ENCODE measurements at regions of chr1 and their contacts with region 1.

Region 1: DNA sequence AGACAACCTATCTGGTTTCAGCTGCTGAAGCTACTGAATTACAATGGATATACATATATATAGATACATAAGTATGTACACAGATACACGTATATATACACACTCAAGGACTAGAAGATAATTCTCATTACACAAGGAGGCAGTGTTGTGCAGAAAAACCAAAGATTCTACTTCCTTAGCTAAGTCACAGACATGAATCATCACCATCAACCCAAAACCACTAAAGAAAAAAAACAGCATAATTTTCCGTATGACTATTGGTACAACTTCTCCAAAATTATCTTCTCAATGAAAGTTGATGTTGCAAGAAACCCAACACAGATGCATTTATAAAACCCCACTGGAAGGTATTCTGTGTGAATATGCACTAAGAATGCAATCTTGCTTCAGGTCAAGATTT is 36.8 kb upstream of the RPF1 start:
- DNase-seq: no peak
- H3K4me3 Mint-ChIP-seq: no peak overlapping the region
- H3K27ac Mint-ChIP-seq: no peak overlapping the region
- H3K4me1 Mint-ChIP-seq: peaks cover 25% of the 10 kb centered on the region
- H3K27me3 Mint-ChIP-seq: no peaks in the 10 kb centered on the region

Region 2: GRCh38 chr1:84506002-84506728 is 63.9 kb after region 1 on chr1 and contains the starts of genes GNG5 and SPATA1:
- CTCF ChIA-PET with region 1: interaction called, 6 read pairs
- intact Hi-C with region 1: loop called (anchors 1 kb)
- DNase-seq: peak; percentile 97
- H3K4me3 Mint-ChIP-seq: peak within 1 kb of the TSS; percentile 100
- H3K27ac Mint-ChIP-seq: peak within 1 kb of the TSS; percentile 98
- H3K4me1 Mint-ChIP-seq: peaks cover 27% of the 10 kb centered on the region
- H3K27me3 Mint-ChIP-seq: no peaks in the 10 kb centered on the region
- total RNA-seq, gene GNG5: 128 to 132 TPM
- total RNA-seq, gene SPATA1: 1.8 to 2.7 TPM

Region 3: DNA sequence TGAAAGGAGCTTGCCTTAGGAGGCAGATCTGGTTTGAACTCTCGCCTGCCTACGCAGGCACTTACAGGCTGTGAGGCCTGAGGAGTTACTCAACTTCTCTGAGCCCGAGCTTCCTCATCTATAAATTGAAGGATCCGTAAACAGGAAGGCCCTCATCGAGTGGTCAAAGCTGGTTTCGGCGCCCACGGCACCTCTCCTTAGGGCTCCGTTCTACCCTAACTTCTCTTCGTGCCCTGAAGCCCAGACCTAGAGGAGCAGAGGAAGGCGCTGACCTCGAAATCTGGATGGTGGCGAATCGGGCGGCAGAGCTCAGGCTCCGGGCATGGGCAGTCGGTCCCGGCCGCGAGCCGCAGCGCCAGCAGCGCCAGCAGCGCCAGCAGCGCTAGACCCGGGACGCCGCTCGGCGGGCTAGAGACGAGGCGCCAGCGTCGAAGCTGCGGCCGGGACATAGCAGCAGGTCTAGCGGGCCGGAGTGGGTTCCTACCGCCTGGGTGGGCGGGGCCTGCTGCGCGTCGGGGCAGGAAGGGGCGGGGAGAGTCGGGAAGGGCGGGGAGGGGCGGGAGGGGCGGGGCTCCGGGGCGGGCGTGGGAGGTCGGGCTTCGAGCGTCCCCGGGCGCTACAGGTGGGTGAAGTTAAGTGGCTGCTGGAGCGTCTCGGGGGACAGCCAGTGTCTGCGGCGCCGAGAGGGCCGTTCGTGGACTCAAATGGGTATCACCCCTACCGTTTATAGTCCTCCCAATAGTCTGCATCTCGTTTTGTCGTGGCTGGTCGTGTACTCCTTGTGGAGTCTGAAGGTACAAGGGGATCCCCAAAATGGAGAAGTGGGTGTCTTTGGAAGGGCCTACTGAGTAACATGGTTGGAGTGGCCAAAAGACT is 131.9 kb after region 1 on chr1 and contains the start of gene CTBS:
- CTCF ChIA-PET with region 1: interaction called, 9 read pairs
- intact Hi-C with region 1: loop called (anchors 1 kb)
- DNase-seq: peak; percentile 86
- H3K4me3 Mint-ChIP-seq: peak within 1 kb of the TSS; percentile 95
- H3K27ac Mint-ChIP-seq: peak within 1 kb of the TSS; percentile 98
- H3K4me1 Mint-ChIP-seq: peaks cover 28% of the 10 kb centered on the region
- H3K27me3 Mint-ChIP-seq: no peaks in the 10 kb centered on the region
- total RNA-seq, gene CTBS: 21.1 to 21.2 TPM

Region 4: DNA sequence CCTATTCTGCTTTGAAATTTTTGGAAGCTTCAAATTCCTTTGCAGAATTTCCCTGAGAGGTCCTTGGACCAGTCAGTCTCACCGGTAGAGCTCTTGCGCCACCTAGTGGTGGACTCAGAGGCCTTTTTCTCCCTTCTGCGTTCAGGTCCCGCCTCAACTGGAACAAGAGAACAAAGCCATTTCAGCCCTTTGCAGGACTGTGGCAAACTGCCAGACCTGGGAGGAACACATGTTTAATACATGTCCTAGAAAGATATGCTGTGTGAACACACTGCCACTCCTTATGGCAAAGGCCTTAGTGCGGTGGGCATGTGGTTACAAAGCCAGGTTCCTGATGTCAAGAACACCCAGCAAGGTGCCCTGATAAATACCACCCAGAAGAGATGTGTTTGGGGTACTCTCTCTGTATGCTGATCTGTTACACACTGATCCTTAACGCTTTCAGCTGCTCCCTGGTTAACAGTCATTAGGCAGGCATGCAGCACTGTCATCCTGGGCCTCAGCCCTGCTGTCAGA is 330.2 kb after region 1 on chr1:
- CTCF ChIA-PET with region 1: interaction called, 6 read pairs
- intact Hi-C with region 1: loop called (anchors 1 kb)
- DNase-seq: peak; percentile 86
- H3K4me3 Mint-ChIP-seq: no peak overlapping the region
- H3K27ac Mint-ChIP-seq: no peak overlapping the region
- H3K4me1 Mint-ChIP-seq: no peaks in the 10 kb centered on the region
- H3K27me3 Mint-ChIP-seq: no peaks in the 10 kb centered on the region